ENCODE measurements at regions of chr16 and their contacts with region 1.

Region 1: GRCh38 chr16:89049461-89050118 is 44.1 kb upstream of the ACSF3 start:
- DNase-seq: peak in 3 of 5 donors; percentile 11 to 52 (median 16)
- ATAC-seq: no peak
- H3K4me3 ChIP-seq: peak overlapping the region in 1 of 12 donors; percentile 14
- H3K27ac ChIP-seq: no peak overlapping the region
- H3K4me1 ChIP-seq: no peaks in the 10 kb centered on the region
- H3K27me3 ChIP-seq: peaks cover 15 to 74% (median 31%) of the 10 kb centered on the region in 9 donors
- CTCF ChIP-seq: no peak
- POLR2A ChIP-seq: no peak

Region 2: GRCh38 chr16:89104930-89105571 is 55.5 kb after region 1 on chr16:
- intact Hi-C with region 1: loop called in 1 of 10 experiments (anchors 10 kb)
- DNase-seq: peak in 1 of 5 donors; percentile 56
- ATAC-seq: peak in 3 of 4 donors; percentile 36 to 62 (median 42)
- H3K4me3 ChIP-seq: no peak overlapping the region
- H3K27ac ChIP-seq: no peak overlapping the region
- H3K4me1 ChIP-seq: peaks cover 0 to 2% (median 0%) of the 10 kb centered on the region in 12 donors
- H3K27me3 ChIP-seq: no peaks in the 10 kb centered on the region
- CTCF ChIP-seq: no peak
- POLR2A ChIP-seq: no peak

Measured in heart left ventricle (tissue), 16 donors.